T-cell (primary cell): ENCODE measurements at regions of chr16 and their contacts with region 1.

Region 1: DNA sequence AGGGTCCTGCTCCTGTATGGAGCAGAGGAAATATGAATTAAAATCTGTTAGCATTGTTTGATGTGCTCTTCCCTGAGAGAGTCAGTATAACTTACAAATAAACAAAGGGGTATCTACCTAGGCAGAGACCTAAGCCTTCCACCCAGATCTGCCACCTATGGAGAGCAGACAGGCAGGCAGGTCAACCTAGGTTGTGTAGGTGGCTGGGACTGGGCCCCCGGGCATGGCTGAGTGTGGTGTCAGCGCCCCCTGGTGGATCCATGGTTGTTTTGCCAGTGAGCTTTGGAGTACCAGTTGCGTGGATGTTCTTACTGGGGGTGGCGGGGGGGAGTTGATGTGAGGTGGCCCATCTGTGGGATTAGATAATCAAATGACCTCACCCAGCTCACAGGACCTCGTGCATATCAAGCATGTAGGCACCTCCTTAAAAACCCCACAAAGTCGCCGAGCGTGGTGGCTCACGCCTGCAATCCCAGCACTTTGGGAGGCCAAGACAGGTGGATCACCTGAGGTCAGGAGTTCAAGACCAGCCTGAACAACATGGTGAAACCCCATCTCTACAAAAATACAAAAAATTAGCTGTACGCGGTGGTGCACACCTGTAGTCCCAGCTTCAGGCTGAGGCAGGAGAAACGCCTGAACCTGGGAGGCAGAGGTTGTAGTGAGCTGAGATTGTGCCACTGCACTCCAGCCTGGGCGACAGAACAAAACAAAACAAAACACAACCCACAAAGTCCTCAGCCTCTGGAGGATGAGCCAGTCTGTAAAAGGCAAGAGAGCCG is 17.6 kb downstream of the DUS2 start:
- DNase-seq: peak; percentile 66 to 95 (median 86)
- ATAC-seq: peak; percentile 98 to 99 (median 98)
- H3K4me3 ChIP-seq: no peak overlapping the region
- H3K4me3 Mint-ChIP-seq: no peak overlapping the region
- H3K27ac ChIP-seq: no peak overlapping the region
- H3K27ac Mint-ChIP-seq: peak overlapping the region; percentile 86 to 88
- H3K4me1 ChIP-seq: peaks cover 2 to 13% of the 10 kb centered on the region in 2 experiments
- H3K4me1 Mint-ChIP-seq: peaks cover 5 to 18% (median 9%) of the 10 kb centered on the region in 3 donors
- H3K27me3 ChIP-seq: no peaks in the 10 kb centered on the region
- H3K27me3 Mint-ChIP-seq: no peaks in the 10 kb centered on the region

Region 2: GRCh38 chr16:67816240-67817031 is 224.3 kb before region 1 on chr16:
- CTCF ChIA-PET with region 1: interaction called, 3 to 12 read pairs
- POLR2A ChIA-PET with region 1: no interaction called
- DNase-seq: peak; percentile 67 to 94 (median 86)
- ATAC-seq: peak; percentile 93 to 98 (median 96)
- H3K4me3 ChIP-seq: no peak overlapping the region
- H3K4me3 Mint-ChIP-seq: peak overlapping the region in 1 of 3 donors; percentile 39
- H3K27ac ChIP-seq: no peak overlapping the region
- H3K27ac Mint-ChIP-seq: peak overlapping the region in 1 of 2 donors; percentile 27
- H3K4me1 ChIP-seq: peaks cover 0 to 8% of the 10 kb centered on the region in 2 experiments
- H3K4me1 Mint-ChIP-seq: peaks cover 5 to 9% (median 5%) of the 10 kb centered on the region in 3 donors
- H3K27me3 ChIP-seq: peaks cover 0 to 5% of the 10 kb centered on the region in 2 experiments
- H3K27me3 Mint-ChIP-seq: no peaks in the 10 kb centered on the region

Region 3: GRCh38 chr16:67993189-67994039 is 47.3 kb before region 1 on chr16:
- CTCF ChIA-PET with region 1: interaction called, 7 to 14 read pairs
- POLR2A ChIA-PET with region 1: no interaction called
- DNase-seq: peak; percentile 57 to 92 (median 74)
- ATAC-seq: peak; percentile 86 to 93 (median 90)
- H3K4me3 ChIP-seq: peak overlapping the region; percentile 53 to 74
- H3K4me3 Mint-ChIP-seq: peak overlapping the region; percentile 80 to 88 (median 81)
- H3K27ac ChIP-seq: peak overlapping the region; percentile 83
- H3K27ac Mint-ChIP-seq: peak overlapping the region; percentile 98 to 99
- H3K4me1 ChIP-seq: peaks cover 14 to 45% of the 10 kb centered on the region in 2 experiments
- H3K4me1 Mint-ChIP-seq: peaks cover 18 to 50% (median 43%) of the 10 kb centered on the region in 3 donors
- H3K27me3 ChIP-seq: no peaks in the 10 kb centered on the region
- H3K27me3 Mint-ChIP-seq: no peaks in the 10 kb centered on the region